BJ (cell line): ENCODE measurements at regions of chr22 and their contacts with region 1.

Region 1: GRCh38 chr22:32281072-32281471 is 25.9 kb upstream of the SLC5A4 start:
- DNase-seq: no peak
- H3K4me3 ChIP-seq: no peak overlapping the region
- H3K27me3 ChIP-seq: no peaks in the 10 kb centered on the region
- CTCF ChIP-seq: no peak

Region 2: DNA sequence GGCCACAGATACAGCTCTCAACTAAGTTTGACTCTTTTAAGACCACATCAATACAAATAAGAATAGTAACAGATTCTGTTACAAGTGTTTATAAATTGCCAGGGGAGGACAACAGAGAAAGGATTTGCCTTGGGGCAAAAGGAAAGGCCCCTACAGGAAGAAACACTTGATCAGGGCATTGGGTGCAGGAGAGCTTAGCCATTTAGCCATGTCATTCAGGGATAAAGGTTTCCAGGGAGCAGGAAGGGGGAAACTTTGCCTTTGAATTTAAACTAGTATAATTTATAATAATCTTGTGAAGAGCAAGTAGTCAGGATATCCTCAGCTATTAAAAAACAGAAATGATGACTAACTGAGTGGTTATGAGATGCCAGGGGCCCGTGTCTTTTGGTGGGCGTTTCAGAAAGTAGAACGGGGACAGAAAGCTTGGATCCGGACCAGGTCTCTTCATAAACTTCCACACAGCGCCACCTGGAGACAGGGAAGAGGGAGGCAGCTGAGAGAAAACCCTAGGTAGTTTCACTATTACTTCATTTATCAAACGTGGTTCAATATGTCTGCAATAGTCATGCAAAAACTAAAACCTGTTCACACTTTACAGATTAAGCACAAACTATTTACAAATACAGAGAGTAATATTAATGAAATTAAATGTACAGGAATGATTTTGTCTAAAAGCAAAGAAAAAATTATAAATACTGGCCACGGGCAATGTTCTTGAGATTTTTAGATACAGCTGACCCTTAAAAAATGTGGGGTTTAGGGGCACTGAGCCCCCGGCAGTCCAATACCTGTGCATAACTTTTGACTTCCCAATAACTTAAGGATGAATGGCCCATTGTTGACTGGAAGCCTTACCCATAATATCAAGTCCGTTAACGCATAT is 14.9 kb before region 1 on chr22:
- CTCF ChIA-PET with region 1: interaction called, 10 read pairs
- POLR2A ChIA-PET with region 1: no interaction called
- DNase-seq: no peak
- H3K4me3 ChIP-seq: no peak overlapping the region
- H3K27me3 ChIP-seq: no peaks in the 10 kb centered on the region
- CTCF ChIP-seq: peak; percentile 90